ENCODE measurements at regions of chr14 and their contacts with region 1.

Region 1: DNA sequence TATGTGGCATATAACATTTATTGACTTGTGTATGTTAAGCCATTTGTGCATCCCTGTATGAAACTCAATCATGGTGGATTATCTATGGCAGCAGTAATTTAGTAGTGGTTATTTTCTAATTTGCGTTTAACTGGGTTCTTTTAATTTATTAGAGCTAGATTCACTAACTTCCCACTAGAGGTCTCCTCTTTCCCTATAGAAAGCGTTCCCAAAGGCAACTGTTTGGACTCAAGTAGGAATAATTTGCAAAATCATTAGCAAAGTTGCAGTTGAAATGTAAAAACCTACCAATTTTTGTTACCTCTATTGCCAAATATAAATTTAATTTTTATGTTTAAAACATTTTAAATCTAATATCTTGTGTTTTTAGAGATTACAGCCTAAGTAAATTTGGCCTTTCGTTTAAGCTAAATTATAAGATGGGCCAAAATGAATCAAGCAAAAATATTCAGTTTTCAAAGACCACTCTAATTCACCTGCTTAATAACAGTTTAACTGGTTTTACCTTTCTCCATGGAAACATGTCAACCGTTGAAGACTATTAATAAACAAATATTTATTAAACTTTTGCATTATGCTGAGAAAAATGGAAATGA is 6.0 kb downstream of the DMAC2L start:
- DNase-seq: no peak
- H3K4me3 ChIP-seq: no peak overlapping the region
- H3K27ac ChIP-seq: peak overlapping the region in 1 of 2 donors; percentile 87
- H3K4me1 ChIP-seq: no peaks in the 10 kb centered on the region
- H3K27me3 ChIP-seq: no peaks in the 10 kb centered on the region
- CTCF ChIP-seq: peak; percentile 62 to 78 (median 66)
- POLR2A ChIP-seq: no peak

Region 2: DNA sequence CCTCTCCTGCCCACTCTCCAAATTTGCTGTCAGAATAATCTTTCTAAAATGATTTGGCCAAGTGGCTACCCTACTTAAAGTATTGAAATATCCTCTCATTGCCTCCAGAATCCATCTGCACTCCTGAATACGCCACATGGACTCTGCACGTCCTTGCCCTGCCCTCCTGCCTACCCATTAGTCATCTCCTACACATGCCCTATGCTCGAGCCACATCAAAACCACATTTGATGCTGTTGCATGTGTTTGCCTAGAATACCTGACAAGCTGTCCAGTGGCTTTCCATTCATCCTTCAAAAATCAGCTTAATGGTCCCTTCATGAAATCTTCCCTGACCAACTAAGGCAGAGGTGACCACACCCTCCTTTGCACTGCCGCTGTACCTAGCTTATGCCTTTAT is 218.8 kb before region 1 on chr14:
- intact Hi-C with region 1: no loop called
- DNase-seq: no peak
- H3K4me3 ChIP-seq: no peak overlapping the region
- H3K27ac ChIP-seq: no peak overlapping the region
- H3K4me1 ChIP-seq: no peaks in the 10 kb centered on the region
- H3K27me3 ChIP-seq: no peaks in the 10 kb centered on the region
- CTCF ChIP-seq: no peak
- POLR2A ChIP-seq: no peak

Region 3: DNA sequence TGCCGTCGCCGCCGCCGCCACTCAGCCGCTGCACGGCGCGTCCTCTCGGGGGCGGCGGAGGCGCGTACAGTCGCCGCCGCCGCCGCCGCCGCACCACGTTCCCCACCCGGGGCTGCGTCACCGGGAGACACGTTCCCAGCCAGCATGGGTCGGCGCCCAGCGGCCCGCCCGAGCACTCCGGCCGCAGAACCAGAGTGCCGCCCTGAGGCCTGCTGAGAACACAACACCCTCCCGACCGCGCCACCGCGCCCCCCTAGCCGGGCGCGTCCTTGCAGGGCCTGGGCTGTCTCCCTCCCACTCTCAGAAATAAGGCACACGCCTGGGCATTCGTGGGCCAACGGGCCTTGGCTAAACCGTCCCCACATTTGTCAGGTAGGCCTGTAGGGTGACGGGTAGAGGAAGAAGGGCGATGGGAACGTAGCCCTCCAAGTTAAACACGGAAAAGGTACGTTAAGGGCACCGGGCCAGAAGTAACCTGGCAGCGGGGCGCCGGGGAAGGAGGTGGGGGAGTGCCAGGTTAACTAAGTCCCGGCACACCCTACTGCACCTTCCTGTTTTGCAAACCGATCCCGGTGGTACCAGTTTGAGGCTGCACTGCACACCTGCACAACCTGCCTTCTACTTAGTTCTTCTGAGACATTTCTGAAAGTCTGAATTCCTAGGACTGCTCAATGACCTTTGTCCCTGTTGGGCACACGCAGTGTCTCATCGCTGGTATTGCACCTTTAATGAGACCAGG is 214.5 kb after region 1 on chr14 and contains the start of gene MAP4K5:
- intact Hi-C with region 1: loop called (anchors 2 kb)
- DNase-seq: peak; percentile 89 to 91
- H3K4me3 ChIP-seq: peak within 1 kb of the TSS; percentile 65 to 82
- H3K27ac ChIP-seq: peak within 1 kb of the TSS; percentile 93 to 97
- H3K4me1 ChIP-seq: peaks cover 0 to 11% of the 10 kb centered on the region in 2 donors
- H3K27me3 ChIP-seq: no peaks in the 10 kb centered on the region
- CTCF ChIP-seq: peak; percentile 95 to 99 (median 98)
- POLR2A ChIP-seq: peak; percentile 68 to 79
- total RNA-seq, gene MAP4K5: 44.6 to 179 (median 97.8) TPM

Measured in uterus (tissue), 4 donors.